ENCODE measurements at regions of chr18 and their contacts with region 1.

Region 1: GRCh38 chr18:59988098-59988706 is 88.4 kb downstream of the PMAIP1 start:
- DNase-seq: peak; percentile 31
- H3K4me3 ChIP-seq: no peak overlapping the region
- H3K27ac ChIP-seq: no peak overlapping the region
- H3K4me1 ChIP-seq: no peaks in the 10 kb centered on the region
- H3K27me3 ChIP-seq: no peaks in the 10 kb centered on the region
- CTCF ChIP-seq: peak; percentile 94

Region 2: GRCh38 chr18:60549338-60549960 is 561.2 kb after region 1 on chr18:
- intact Hi-C with region 1: loop called (anchors 2 kb)
- DNase-seq: no peak
- H3K4me3 ChIP-seq: no peak overlapping the region
- H3K27ac ChIP-seq: no peak overlapping the region
- H3K4me1 ChIP-seq: no peaks in the 10 kb centered on the region
- H3K27me3 ChIP-seq: no peaks in the 10 kb centered on the region
- CTCF ChIP-seq: peak; percentile 76

Measured in colonic mucosa (tissue), 4 donors.